H1 (cell line): ENCODE measurements at regions of chr13 and their contacts with region 1.

Region 1: GRCh38 chr13:102091231-102091630 is 310.6 kb downstream of the FGF14 start:
- DNase-seq: peak; percentile 56 to 73
- H3K4me3 ChIP-seq: no peak overlapping the region
- H3K27ac ChIP-seq: no peak overlapping the region
- H3K4me1 ChIP-seq: no peaks in the 10 kb centered on the region
- H3K27me3 ChIP-seq: no peaks in the 10 kb centered on the region
- CTCF ChIP-seq: peak; percentile 43 to 96 (median 84)
- EP300 ChIP-seq: no peak
- POLR2A ChIP-seq: no peak
- RAD21 ChIP-seq: peak; percentile 63 to 68

Region 2: DNA sequence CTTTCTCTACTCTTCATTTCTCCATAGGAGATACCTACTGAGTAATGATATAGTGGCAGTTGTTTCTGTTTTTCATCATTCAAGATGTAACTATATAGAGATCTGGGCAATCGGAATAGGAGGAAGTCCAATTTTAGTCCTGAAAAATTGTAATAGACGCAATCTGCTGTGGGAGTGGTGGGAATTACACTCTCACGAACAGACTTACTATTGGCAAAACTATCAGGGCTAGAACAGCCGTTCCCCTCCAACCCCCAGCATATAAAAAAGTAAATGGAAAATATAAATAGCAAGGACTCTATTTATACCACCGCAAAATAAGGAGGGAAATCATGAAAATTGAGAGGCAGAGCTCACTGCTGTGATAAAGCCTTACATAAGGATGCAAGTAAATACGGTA is 19.5 kb before region 1 on chr13:
- CTCF ChIA-PET with region 1: interaction called, 10 read pairs
- POLR2A ChIA-PET with region 1: no interaction called
- DNase-seq: no peak
- H3K4me3 ChIP-seq: no peak overlapping the region
- H3K27ac ChIP-seq: no peak overlapping the region
- H3K4me1 ChIP-seq: no peaks in the 10 kb centered on the region
- H3K27me3 ChIP-seq: no peaks in the 10 kb centered on the region
- CTCF ChIP-seq: no peak
- EP300 ChIP-seq: no peak
- POLR2A ChIP-seq: no peak
- RAD21 ChIP-seq: no peak